SK-N-SH (cell line): ENCODE measurements at regions of chr1 and their contacts with region 1.

Region 1: GRCh38 chr1:36369061-36369861 is 16.5 kb downstream of the STK40 start:
- DNase-seq: peak; percentile 84
- H3K4me3 ChIP-seq: peak overlapping the region in 1 of 2 experiments; percentile 26; a peak in 1 of 4 replicates
- H3K27ac ChIP-seq: peak overlapping the region; percentile 5 to 99; a peak in 3 of 4 replicates
- H3K4me1 ChIP-seq: peaks cover 39 to 62% of the 10 kb centered on the region in 2 experiments
- H3K27me3 ChIP-seq: no peaks in the 10 kb centered on the region
- CTCF ChIP-seq: peak; percentile 85
- EP300 ChIP-seq: no peak
- RAD21 ChIP-seq: peak; percentile 72

Region 2: DNA sequence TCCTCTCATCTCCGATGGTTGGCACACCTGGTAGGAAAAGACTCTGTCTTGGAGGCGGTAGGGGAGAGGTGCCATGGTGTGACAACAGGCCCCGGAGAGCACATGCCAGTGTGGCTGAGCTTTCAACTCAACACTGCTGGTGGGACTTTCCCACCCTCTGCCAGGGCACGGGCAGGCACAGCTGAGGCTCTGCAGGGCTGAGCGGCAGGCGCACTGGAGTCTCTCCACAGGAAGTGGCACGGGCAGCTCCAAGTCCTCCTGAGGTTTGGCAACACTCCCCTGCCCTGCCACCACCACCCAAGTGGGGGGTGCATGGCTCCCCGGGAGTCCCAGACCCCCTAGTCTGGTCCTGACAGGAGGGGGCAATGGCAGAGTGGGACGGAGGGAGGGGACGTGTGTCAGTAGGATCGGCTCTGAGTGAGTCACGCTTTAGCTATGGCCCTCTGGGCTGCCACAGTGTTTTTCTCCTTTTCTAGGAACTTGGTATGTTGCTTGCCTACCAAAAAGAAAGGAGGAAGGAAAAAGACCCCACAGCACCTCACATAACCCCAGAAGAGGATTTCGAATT is 18.5 kb before region 1 on chr1:
- CTCF ChIA-PET with region 1: interaction called, 86 read pairs
- POLR2A ChIA-PET with region 1: interaction called, 10 read pairs
- DNase-seq: no peak
- H3K4me3 ChIP-seq: peak overlapping the region in 1 of 2 experiments; percentile 33; a peak in 1 of 4 replicates
- H3K27ac ChIP-seq: peak overlapping the region; percentile 96 to 100
- H3K4me1 ChIP-seq: peaks cover 32 to 50% of the 10 kb centered on the region in 2 experiments
- H3K27me3 ChIP-seq: no peaks in the 10 kb centered on the region
- CTCF ChIP-seq: no peak
- EP300 ChIP-seq: peak in 1 of 2 experiments; percentile 90; a peak in 1 of 4 replicates
- RAD21 ChIP-seq: no peak

Region 3: GRCh38 chr1:36385410-36386257 is 16.4 kb after region 1 on chr1 and contains the start of gene STK40:
- CTCF ChIA-PET with region 1: interaction called, 78 read pairs
- POLR2A ChIA-PET with region 1: interaction called, 3 read pairs
- DNase-seq: peak; percentile 97
- H3K4me3 ChIP-seq: peak within 1 kb of the TSS; percentile 79 to 83
- H3K27ac ChIP-seq: peak within 1 kb of the TSS; percentile 97 to 99
- H3K4me1 ChIP-seq: peaks cover 25 to 30% of the 10 kb centered on the region in 2 experiments
- H3K27me3 ChIP-seq: no peaks in the 10 kb centered on the region
- CTCF ChIP-seq: no peak
- EP300 ChIP-seq: no peak
- RAD21 ChIP-seq: no peak
- polyA plus RNA-seq, gene STK40: 39.0 and 43.3 TPM in 2 replicates

Region 4: DNA sequence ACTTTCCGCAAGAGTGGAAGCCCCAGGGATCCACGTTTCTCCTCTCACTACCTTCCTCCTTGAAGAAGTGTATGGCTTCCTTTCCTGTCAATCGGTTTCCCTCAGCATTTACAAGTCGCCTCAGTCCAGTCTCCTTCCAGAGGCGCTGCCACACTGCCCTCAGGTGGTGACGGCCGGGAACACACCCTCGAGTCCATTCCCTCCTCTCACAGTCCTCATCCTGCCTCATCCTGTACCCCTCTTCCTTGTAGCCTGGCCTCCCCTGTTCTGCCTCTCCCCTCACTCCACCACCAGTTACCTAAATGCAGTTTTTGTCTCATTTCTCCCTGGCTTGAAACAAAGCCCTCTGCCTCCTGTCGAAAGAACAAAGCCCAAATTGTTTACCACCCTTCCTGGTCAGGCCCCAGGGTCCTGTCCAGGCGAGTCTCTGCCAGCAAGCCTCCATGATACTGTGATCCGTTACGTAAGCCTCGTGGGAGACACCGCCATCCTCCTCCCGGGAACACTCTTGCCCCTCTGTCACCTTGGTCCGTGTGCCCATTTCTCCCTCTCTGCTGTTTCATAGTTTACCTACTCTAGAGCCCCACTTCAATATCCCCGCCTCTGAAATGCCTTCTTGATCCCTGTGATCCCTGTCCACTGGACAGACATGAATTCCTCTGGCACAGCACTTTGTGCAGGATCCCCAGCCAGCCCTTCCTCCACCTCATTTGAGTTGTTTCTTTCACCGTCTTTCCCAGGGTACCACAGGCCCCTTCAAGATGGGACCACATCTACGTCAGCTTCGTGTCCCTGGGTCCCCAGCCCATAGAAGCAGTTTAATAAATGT is 51.8 kb after region 1 on chr1:
- CTCF ChIA-PET with region 1: interaction called, 31 read pairs
- POLR2A ChIA-PET with region 1: no interaction called
- DNase-seq: peak; percentile 78
- H3K4me3 ChIP-seq: peak overlapping the region in 1 of 2 experiments; percentile 30; a peak in 1 of 4 replicates
- H3K27ac ChIP-seq: peak overlapping the region in 1 of 2 experiments; percentile 36; a peak in 1 of 4 replicates
- H3K4me1 ChIP-seq: peaks cover 0 to 5% of the 10 kb centered on the region in 2 experiments; a peak in 2 of 4 replicates
- H3K27me3 ChIP-seq: no peaks in the 10 kb centered on the region
- CTCF ChIP-seq: peak; percentile 92
- EP300 ChIP-seq: no peak
- RAD21 ChIP-seq: peak; percentile 99

Region 5: DNA sequence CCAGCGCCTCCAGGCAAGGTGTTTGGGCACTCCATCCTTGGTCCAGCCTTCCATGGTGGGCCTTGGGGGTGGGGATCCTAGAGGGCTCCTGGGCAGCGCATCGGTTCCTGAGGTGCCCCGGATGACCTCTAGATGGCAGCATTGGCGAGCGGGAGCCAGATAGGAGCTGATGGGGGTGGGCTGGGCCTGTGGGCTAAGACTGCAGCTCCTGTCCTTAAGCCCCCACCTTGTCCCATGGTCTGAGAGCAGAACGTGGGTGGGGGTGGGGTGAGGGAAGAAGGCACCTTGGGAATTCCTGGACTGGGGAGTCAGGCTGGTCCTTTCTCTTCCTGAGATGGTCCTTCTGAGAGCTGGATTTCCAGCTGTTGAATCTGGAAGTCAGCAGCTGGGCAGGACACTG is 206.9 kb after region 1 on chr1:
- CTCF ChIA-PET with region 1: no interaction called
- POLR2A ChIA-PET with region 1: no interaction called
- DNase-seq: peak; percentile 91
- H3K4me3 ChIP-seq: peak overlapping the region in 1 of 2 experiments; percentile 32; a peak in 1 of 4 replicates
- H3K27ac ChIP-seq: no peak overlapping the region
- H3K4me1 ChIP-seq: no peaks in the 10 kb centered on the region; a peak in 1 of 4 replicates
- H3K27me3 ChIP-seq: no peaks in the 10 kb centered on the region
- CTCF ChIP-seq: peak; percentile 83
- EP300 ChIP-seq: no peak
- RAD21 ChIP-seq: peak; percentile 89

Region 6: GRCh38 chr1:36703526-36704208 is 334.4 kb after region 1 on chr1:
- CTCF ChIA-PET with region 1: no interaction called
- POLR2A ChIA-PET with region 1: no interaction called
- DNase-seq: peak; percentile 89
- H3K4me3 ChIP-seq: no peak overlapping the region; a peak in 1 of 4 replicates
- H3K27ac ChIP-seq: no peak overlapping the region
- H3K4me1 ChIP-seq: no peaks in the 10 kb centered on the region; a peak in 1 of 4 replicates
- H3K27me3 ChIP-seq: no peaks in the 10 kb centered on the region
- CTCF ChIP-seq: peak; percentile 68
- EP300 ChIP-seq: peak in 1 of 2 experiments; percentile 41; a peak in 1 of 4 replicates
- RAD21 ChIP-seq: peak; percentile 95